Tibial artery (tissue), 4 donors: ENCODE measurements at regions of chr14 and their contacts with region 1.

Region 1: DNA sequence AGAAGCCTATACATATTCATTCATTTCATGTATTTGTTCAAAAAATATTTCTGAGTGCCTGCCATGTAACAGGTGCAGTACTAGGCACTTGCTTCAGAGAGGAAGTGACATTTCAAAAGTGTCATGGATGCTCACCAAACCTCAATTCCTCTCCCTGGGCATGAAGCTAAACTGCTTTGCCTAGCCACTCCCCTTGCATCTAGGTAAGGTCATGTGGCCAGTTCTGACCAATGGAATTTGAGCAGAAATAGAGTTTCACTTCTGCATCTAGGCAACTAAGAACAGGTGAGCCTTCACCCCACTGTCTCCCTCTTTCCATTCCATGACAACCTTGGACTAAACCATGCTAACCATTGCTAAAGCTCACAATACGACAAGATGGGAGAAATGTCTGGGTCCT is 27.6 kb downstream of the TC2N start:
- DNase-seq: no peak
- H3K4me3 ChIP-seq: no peak overlapping the region
- H3K27ac ChIP-seq: peak overlapping the region in 1 of 2 donors; percentile 97
- H3K4me1 ChIP-seq: peaks cover 0 to 40% (median 9%) of the 10 kb centered on the region in 4 donors
- H3K27me3 ChIP-seq: no peaks in the 10 kb centered on the region
- CTCF ChIP-seq: no peak

Region 2: DNA sequence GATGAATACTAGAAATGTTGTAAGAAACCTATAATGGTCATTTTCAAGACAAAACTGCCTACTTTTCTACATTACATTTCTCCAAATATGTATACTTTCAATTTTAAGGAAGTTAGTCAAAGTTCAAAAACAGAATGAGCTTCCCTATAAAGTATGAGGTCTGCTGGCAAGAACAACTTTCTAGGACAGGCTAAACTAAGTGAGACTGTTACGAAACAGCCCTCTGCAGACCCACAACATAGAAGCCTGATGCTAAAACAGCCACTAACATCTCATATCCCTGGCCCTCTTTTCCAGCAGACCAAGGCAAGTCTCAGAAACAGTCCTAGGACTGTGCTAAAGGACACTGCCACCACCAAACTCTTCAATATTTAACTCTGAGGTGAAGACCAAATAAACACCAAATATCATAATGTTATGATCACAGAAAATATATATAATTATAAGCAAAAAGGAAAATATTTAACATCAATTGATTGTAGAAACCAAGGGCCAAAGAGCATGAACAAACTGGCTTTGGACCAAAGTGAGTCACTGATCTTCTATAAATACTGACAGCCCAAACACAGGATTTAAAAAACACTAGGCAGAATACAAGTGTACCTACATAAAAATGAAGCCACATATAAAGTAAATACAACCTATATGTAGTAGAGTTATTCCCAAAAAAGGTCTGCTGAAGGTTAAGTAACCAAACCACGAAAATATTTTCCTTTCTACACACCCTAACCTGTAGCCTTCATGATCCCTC is 357.3 kb before region 1 on chr14:
- intact Hi-C with region 1: no loop called
- DNase-seq: no peak
- H3K4me3 ChIP-seq: no peak overlapping the region
- H3K27ac ChIP-seq: peak overlapping the region; percentile 23 to 45
- H3K4me1 ChIP-seq: peaks cover 0 to 51% (median 20%) of the 10 kb centered on the region in 4 donors
- H3K27me3 ChIP-seq: no peaks in the 10 kb centered on the region
- CTCF ChIP-seq: no peak

Region 3: DNA sequence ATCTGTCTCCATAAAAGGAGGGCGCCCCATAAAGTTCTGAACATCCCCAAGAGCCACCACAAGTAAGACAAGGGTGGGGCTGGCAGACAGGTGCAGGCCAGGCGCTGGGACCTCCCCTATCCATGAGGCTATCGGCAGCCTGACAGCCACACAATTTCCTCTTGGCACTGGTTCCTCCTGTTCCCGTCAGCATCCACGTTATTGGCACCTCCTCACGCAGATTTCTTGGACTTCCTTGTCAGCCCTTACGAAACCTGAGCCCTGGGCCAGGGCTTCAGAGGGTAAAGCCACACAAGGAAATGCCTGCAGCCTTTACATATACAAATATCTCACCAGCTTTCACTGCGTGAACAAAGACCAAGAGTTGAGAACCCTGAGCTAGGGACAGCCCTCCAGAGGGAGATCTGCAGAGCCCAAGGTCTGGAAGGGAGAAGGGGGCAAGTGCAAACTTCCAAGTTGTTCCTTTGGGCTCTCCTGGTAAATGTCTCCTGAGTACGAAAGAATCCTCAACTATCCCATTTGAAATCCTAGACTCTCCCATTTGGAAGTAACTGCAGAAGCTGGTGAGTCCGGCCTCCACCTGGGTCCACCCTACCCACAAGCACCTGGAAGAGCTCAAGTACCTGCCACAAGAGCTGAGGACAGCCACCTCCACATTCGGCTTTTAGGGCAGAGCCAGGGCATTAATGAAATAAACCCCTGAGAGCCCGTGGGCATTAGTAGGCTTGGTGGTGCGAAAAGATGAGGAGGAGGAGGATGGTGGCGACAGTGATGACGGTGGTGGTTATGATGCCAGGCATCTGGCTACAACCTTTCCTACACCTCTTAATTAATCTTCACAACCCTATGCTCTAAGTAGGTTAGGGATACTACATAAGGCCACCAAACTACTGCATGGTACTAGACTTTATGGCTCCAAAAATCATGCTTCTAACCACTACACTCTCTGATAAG is 33.0 kb after region 1 on chr14:
- intact Hi-C with region 1: no loop called
- DNase-seq: peak; percentile 90 to 96
- H3K4me3 ChIP-seq: no peak overlapping the region
- H3K27ac ChIP-seq: peak overlapping the region; percentile 76 to 79
- H3K4me1 ChIP-seq: peaks cover 0 to 34% (median 24%) of the 10 kb centered on the region in 4 donors
- H3K27me3 ChIP-seq: no peaks in the 10 kb centered on the region
- CTCF ChIP-seq: no peak

Region 4: DNA sequence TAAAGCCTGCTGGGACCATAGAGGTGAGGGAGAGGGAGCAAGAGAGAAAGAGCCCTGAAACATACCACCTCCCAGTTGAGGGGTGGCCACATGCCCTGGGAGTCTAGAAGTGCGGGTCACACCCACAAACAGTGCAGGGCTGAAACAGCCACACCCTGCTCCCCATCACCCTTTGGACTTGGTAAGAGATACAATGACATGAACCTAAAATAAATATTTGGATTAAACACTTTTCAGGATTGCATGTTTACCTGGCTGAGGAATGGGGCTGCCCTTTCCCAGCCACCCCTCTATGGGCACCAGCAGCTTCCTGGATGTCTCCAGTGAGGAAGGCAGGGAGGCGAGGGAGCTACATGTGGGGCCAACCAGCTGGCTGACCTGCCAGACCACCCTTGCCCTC is 66.6 kb after region 1 on chr14:
- intact Hi-C with region 1: loop called (anchors 2 kb)
- DNase-seq: no peak
- H3K4me3 ChIP-seq: no peak overlapping the region
- H3K27ac ChIP-seq: peak overlapping the region in 1 of 2 donors; percentile 30
- H3K4me1 ChIP-seq: peaks cover 0 to 51% (median 32%) of the 10 kb centered on the region in 4 donors
- H3K27me3 ChIP-seq: no peaks in the 10 kb centered on the region
- CTCF ChIP-seq: no peak